ENCODE measurements at regions of chr7 and their contacts with region 1.

Region 1: GRCh38 chr7:124032369-124033094 is at the start of gene TMEM229A:
- DNase-seq: peak; percentile 47
- H3K4me3 Mint-ChIP-seq: peak within 1 kb of the TSS; percentile 98
- H3K27ac Mint-ChIP-seq: no peak within 1 kb of the TSS
- H3K4me1 Mint-ChIP-seq: peaks cover 14% of the 10 kb centered on the region
- H3K27me3 Mint-ChIP-seq: peaks cover 64% of the 10 kb centered on the region
- CTCF ChIP-seq: no peak
- total RNA-seq, gene TMEM229A: not detected in 2 replicates

Region 2: GRCh38 chr7:123929107-123929506 is 103.4 kb before region 1 on chr7:
- CTCF ChIA-PET with region 1: no interaction called
- intact Hi-C with region 1: loop called (anchors 5 kb)
- DNase-seq: peak; percentile 37
- H3K4me3 Mint-ChIP-seq: no peak overlapping the region
- H3K27ac Mint-ChIP-seq: peak overlapping the region; percentile 66
- H3K4me1 Mint-ChIP-seq: peaks cover 17% of the 10 kb centered on the region
- H3K27me3 Mint-ChIP-seq: no peaks in the 10 kb centered on the region
- CTCF ChIP-seq: no peak

Region 3: DNA sequence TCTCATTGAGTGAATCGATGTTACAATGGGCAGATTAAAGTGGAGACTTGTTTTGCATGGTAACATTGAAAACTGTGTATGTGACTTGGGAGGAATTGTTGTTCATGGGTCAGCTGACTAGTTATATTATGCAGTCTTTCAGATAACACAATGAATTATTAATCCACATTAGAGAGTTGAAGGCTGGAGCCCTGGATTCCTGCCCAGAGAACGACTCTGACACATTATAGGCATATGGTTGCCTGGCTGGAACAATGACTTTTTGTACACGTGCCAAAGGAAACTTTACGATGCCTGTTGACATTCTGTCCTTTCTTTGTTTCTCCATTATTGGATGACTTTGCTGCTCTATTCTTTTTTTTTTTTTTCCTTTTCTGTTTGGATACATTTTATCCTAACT is 52.6 kb after region 1 on chr7:
- CTCF ChIA-PET with region 1: interaction called, 3 read pairs
- intact Hi-C with region 1: loop called (anchors 5 kb)
- DNase-seq: peak; percentile 76
- H3K4me3 Mint-ChIP-seq: no peak overlapping the region
- H3K27ac Mint-ChIP-seq: peak overlapping the region; percentile 16
- H3K4me1 Mint-ChIP-seq: peaks cover 40% of the 10 kb centered on the region
- H3K27me3 Mint-ChIP-seq: peaks cover 41% of the 10 kb centered on the region
- CTCF ChIP-seq: no peak

Region 4: GRCh38 chr7:124924906-124925305 is 892.4 kb after region 1 on chr7:
- CTCF ChIA-PET with region 1: no interaction called
- intact Hi-C with region 1: no loop called
- DNase-seq: no peak
- H3K4me3 Mint-ChIP-seq: no peak overlapping the region
- H3K27ac Mint-ChIP-seq: no peak overlapping the region
- H3K4me1 Mint-ChIP-seq: peaks cover 43% of the 10 kb centered on the region
- H3K27me3 Mint-ChIP-seq: no peaks in the 10 kb centered on the region
- CTCF ChIP-seq: no peak

Measured in Calu3 (cell line).